Activated CD4-positive, alpha-beta memory T cell treated with anti-CD3 and anti-CD28 coated beads for 36 hours (primary cell): ENCODE measurements at regions of chr21 and their contacts with region 1.

Region 1: GRCh38 chr21:28522014-28522799 is 470.5 kb downstream of the LTN1 start:
- DNase-seq: peak; percentile 16
- H3K4me3 Mint-ChIP-seq: no peak overlapping the region
- H3K27ac Mint-ChIP-seq: no peak overlapping the region
- H3K4me1 Mint-ChIP-seq: no peaks in the 10 kb centered on the region
- H3K27me3 Mint-ChIP-seq: no peaks in the 10 kb centered on the region

Region 2: DNA sequence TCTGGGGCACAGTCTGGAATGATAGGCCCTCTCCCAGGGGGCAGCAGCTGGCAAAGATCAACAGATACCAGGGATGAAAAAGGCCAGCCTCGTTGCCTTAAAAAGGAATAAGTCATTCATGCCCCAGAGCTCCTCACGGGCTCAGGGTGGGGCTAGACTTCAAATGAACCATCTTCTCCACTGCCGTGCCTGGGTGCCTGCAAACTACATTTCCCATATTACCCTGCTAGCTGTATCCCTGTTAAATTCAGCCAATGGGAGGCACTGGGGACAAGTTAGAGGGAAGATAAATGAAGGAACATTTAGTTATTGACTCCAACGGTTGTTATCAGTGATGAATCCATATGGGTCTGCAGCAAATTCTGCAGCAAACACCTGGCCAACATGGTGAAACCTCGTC is 1847.9 kb before region 1 on chr21:
- CTCF ChIA-PET with region 1: no interaction called
- POLR2A ChIA-PET with region 1: no interaction called
- intact Hi-C with region 1: loop called (anchors 5 kb)
- DNase-seq: no peak
- H3K4me3 Mint-ChIP-seq: no peak overlapping the region
- H3K27ac Mint-ChIP-seq: no peak overlapping the region
- H3K4me1 Mint-ChIP-seq: no peaks in the 10 kb centered on the region
- H3K27me3 Mint-ChIP-seq: no peaks in the 10 kb centered on the region